Naive thymus-derived CD8-positive, alpha-beta T cell (primary cell): ENCODE measurements at regions of chr3 and their contacts with region 1.

Region 1: DNA sequence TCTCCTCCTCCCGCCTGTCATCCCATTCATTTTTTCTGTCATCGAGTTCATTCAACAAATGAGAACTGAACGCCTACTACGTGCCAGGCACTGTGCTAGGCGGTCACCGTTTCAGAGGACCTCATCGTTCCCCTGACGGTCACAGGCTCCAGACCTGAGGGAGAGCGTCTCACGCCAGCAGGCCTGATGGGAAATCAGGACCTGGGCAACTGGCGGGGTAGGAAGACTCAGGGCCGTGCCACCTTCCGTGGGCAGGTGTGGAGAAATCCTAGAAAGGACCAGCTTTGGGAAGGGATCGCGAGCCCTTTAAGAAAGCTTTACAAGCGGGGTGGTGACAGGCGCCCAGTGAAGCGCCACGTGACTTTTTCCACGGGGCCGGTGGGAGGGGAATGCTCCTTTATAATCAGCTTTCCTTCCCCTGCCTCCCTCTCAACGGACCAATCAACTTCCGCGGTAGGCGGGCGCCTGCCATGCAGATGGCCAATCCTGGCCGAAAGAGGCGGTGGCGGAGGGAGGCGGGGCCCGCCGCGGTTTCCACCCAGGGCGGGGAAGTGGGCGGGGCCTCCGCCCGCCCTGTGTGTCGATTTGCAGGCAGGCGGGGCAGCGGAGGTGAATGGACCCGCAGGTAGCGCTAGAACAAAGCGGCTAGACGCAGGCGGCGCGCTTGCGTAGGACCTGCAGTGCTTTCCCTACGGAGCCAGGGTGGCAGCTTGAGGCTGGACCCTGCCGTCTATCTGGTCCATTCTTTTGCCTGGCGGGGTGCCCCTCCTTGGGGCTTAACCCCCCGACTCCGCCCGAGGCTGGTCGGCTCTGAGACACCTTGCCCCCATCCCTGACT is 816 bp upstream of the DUSP7 start:
- DNase-seq: peak; percentile 92 to 100 (median 99)
- ATAC-seq: peak; percentile 81 to 87
- H3K4me3 Mint-ChIP-seq: peak overlapping the region; percentile 87 to 95 (median 92)
- H3K27ac Mint-ChIP-seq: peak overlapping the region; percentile 85 to 98 (median 93)
- H3K4me1 Mint-ChIP-seq: peaks cover 25 to 39% (median 34%) of the 10 kb centered on the region in 4 donors
- H3K27me3 Mint-ChIP-seq: no peaks in the 10 kb centered on the region

Region 2: DNA sequence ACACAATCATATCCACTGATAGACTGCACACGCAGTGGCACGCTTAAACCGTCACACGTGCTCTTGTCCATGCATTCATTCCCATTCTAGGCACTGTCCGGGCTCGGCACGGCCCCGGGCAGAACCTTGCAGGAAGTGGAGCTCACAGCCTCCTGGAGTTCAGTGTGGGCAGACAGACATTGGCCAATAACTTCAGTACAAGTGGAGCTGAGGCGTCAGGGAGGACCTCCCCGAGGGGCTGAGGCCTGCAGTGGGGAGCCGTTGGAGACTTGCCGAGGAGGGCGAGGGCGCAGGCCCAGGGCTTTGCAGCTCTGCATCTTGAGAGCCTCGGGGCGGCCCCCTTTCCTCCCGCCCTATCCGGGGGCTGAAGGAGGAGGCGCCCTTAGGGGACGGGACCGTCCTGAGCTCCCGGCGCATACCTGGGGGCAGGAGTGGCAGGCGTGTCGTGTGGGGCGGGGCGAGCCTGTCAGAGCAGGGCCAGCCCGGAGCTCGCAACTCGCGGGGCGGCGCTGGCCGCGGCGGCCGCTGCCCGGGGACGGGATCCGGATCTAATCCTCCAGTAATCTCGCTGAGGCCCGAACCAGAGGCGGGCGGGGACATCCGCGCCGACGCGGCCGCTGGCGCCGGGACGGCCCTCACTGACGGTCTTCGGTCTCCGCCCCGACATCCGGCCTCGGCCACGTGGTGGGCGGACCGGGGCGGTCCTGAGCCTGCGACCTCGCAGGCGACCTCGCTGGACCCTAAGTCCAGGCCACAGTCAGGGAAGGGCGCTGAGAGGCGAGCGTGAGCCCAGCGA is 74.2 kb before region 1 on chr3 and contains the start of gene ACY1:
- POLR2A ChIA-PET with region 1: interaction called, 11 read pairs
- DNase-seq: peak; percentile 44 to 79 (median 66)
- ATAC-seq: peak; percentile 85 to 88
- H3K4me3 Mint-ChIP-seq: peak within 1 kb of the TSS; percentile 86 to 99 (median 94)
- H3K27ac Mint-ChIP-seq: peak within 1 kb of the TSS; percentile 91 to 95 (median 94)
- H3K4me1 Mint-ChIP-seq: peaks cover 6 to 36% (median 28%) of the 10 kb centered on the region in 4 donors
- H3K27me3 Mint-ChIP-seq: no peaks in the 10 kb centered on the region
- polyA plus RNA-seq, gene ACY1: 18.5 to 28.5 (median 18.6) TPM

Region 3: DNA sequence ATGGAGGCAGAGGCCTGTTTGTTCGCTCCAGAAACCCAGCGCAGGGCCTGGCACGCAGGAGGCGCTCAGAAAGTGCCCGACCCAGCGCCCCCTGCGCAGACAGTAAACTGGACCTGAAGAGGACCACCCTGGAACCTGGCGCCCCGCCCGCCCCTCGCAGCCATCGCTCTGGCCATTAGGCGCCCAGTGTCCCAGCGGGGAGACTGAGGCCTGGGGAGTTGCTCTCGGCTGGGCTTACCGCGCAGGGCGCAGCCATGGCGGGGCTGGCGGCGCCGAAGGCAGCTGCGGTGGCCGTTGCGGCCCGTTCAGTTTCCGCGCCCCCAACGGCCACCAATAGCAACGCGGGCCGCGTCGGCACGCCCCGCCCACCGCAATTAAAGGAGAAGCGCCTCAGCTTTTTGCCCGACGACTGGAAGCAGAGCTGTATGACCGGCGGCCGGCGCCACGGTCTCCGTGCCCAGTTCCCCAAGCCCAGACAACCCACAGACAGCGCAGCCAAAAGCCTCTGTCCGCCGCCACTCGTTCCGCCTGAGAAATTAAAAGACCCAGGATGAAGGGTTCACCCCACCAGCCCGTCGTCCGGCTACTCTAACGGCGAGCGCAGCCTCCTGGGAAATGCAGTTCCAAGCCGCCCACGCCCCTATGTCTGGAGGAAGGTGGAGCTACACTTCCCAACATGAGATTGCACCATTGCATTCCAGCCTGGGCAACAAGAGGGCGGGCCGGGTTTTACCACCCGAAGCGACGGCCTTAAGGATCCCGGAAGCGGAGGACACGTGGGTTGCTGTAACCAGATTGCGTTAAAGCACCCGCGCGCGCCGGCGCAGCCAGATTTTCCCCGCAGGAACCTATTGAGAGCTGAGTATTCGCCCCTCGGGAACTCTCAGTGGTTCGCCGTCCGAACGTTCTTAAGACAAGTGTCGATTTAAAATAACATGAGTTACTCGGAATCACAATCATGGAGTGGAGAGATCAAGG is 97.2 kb after region 1 on chr3 and contains the start of gene POC1A:
- POLR2A ChIA-PET with region 1: interaction called, 27 read pairs
- DNase-seq: peak; percentile 70 to 87 (median 80)
- ATAC-seq: peak; percentile 87 to 90
- H3K4me3 Mint-ChIP-seq: peak within 1 kb of the TSS; percentile 86 to 98 (median 96)
- H3K27ac Mint-ChIP-seq: peak within 1 kb of the TSS; percentile 91 to 99 (median 96)
- H3K4me1 Mint-ChIP-seq: peaks cover 2 to 13% (median 8%) of the 10 kb centered on the region in 4 donors
- H3K27me3 Mint-ChIP-seq: no peaks in the 10 kb centered on the region
- polyA plus RNA-seq, gene POC1A: 0.28 to 1.1 (median 0.66) TPM

Region 4: DNA sequence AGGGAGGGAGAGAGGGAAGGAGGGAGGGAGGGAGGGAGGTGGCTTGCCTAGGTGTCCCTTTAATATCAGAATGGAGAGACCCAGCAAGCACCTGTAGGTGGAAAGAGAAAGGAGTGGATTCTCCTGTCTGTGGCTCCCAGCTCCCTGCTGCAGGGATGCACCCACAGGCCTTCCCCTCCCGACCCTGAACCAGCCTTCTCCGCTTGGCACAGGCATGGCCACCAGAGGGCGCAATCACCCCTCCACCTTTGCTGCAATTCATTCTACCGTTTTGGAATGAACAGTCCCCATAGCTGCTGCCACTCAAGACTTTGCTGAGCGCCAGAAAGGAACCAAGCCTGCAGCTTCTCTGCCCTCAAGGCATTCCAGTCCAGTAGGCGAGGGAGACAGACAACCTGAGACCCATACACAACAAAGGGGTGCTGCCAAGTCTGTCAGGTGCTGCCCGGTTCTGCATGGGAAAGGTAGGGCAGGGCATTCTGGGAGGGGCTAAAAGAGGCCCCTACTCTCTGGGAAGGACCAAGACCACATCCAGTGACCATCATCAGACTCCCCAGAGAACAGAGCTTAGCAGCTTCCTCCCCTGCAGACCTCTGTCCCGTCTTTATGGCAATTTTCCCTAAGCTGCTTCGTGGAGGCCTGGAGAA is 163.3 kb after region 1 on chr3:
- POLR2A ChIA-PET with region 1: interaction called, 10 read pairs
- DNase-seq: peak; percentile 74 to 92 (median 87)
- ATAC-seq: peak; percentile 64 to 73
- H3K4me3 Mint-ChIP-seq: peak overlapping the region; percentile 32 to 89 (median 73)
- H3K27ac Mint-ChIP-seq: peak overlapping the region; percentile 75 to 92 (median 84)
- H3K4me1 Mint-ChIP-seq: peaks cover 41 to 96% (median 90%) of the 10 kb centered on the region in 4 donors
- H3K27me3 Mint-ChIP-seq: no peaks in the 10 kb centered on the region